ENCODE measurements at regions of chr10 and their contacts with region 1.

Region 1: DNA sequence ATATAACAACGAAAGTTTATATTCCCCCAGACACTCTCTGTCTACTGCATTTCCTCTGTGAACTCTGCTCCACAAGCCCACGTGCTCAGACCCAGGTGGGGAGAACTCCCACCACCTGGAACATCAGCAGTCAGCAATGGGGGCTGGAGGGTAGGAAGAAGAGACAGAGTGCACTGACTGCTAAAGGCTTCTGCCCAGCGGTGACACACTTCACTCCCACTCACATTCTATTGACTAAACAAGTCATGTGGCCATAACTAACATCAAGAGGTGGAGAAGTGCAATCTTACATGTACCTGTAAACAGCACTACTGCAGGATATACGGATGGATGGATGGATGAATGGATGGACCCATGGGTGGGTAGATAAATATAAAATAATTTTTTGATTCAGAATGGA is 122.2 kb downstream of the MPP7 start:
- DNase-seq: no peak
- ATAC-seq: no peak

Region 2: DNA sequence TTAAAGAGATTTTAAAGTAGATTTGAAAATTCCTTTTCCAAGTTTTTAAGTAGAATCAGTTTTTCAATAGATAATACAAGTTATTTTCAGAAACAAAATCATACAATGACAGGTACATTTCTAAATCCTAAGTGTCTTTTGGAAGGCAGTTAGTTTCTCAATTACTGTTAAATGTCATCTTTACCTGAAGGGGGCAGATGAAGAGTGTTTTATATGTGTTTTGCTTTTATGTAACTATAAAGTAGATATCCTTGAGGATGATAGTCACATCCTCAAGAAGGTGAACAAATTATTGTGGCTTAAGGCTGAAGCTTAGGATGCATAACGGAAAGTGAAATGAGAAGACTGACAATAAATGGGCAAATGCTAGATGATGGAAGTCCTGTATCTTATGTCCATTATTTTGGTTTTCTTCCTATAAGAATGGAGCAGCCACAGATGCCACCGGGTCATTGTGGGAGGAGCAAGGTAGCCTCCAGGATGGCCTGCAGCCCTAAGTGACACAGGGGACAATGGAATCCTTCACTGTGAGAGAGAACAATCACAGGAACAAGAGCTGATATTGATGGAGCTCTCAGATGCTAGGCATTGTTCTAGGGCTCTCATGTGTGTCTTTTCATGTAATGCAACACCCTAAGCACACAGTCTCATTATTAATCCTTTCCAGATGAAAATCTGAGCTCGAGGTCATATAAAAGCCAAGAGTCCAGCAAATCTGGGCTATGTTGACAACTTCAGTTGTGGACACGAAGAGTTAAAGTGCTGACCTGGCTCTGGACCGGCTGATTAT is 421.0 kb before region 1 on chr10:
- intact Hi-C with region 1: loop called in 1 of 2 experiments (anchors 10 kb)
- DNase-seq: no peak
- ATAC-seq: no peak

Region 3: GRCh38 chr10:28020080-28020860 is 160.4 kb before region 1 on chr10:
- intact Hi-C with region 1: no loop called
- DNase-seq: no peak
- ATAC-seq: no peak

Region 4: DNA sequence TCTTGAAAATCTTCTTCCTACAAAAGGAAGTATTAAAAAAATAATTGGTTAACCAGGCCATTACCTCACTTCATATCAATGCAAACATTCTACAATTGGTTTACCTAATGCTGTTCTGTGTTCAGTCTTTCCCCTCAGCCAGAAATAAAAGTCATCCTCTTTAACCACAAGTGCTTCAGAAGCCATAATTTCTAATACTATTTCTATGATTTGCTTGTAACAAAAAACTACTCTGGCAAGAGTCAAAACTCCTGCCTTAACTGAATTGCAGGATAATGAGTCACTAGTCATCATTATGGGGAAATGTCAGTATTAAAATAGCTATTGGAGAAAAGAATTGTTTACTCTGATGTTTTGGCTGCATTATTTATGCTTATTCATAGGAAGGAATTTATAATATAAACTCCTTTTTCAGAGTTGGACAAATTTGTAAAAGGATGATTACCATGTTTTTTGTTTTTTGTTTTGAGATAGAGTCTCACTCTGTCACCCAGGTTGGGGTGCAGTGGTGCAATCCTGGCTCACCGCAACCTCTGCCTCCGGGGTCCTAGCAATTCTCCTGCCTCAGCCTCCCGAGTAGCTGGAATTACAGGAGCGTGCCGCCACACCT is 126.3 kb before region 1 on chr10:
- intact Hi-C with region 1: no loop called
- DNase-seq: no peak
- ATAC-seq: no peak